ENCODE measurements at regions of chr7 and their contacts with region 1.

Region 1: DNA sequence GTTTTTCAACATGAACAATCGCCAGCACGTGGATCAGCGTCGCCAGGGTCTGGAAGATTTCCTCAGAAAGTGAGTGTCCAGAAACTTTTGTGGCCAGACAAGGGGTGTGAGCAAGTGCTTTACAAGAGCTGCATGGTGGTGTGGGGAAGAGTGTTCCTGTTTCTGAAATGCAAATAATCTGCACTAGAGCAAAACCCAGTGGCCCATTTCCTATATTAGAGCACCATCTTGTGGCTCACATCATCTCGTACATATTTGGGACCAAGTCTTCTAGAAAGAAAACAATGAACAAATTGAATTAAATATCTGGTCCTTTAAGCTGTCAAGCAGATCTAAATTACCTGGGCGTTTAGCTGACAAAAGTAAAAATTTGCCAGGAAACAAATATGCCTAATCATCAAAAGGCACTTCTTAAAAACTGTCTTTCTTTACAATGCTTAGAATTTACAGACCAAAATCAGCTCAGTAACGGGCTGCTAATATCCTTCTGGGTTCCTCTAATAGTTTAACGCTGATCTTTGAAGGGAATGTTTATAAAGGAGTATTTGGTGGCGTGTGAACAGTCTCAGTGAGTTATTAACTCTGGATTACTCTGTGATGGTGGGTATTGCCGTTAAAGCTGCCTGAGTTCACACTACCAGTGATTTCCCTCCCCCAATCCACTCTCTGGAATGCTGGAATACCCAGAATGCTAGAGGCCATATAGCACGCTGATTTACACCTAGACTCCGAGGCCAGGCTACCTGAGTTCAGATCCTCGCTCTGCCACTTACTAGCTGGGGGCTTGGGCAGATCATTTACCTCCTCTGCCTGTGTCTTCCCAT is 73.6 kb downstream of the SNX10 start:
- DNase-seq: no peak
- ATAC-seq: peak; percentile 89
- H3K4me3 Mint-ChIP-seq: no peak overlapping the region
- H3K27ac Mint-ChIP-seq: peak overlapping the region; percentile 85
- H3K4me1 Mint-ChIP-seq: peaks cover 46% of the 10 kb centered on the region
- H3K27me3 Mint-ChIP-seq: no peaks in the 10 kb centered on the region
- CTCF ChIP-seq: peak; percentile 52

Region 2: DNA sequence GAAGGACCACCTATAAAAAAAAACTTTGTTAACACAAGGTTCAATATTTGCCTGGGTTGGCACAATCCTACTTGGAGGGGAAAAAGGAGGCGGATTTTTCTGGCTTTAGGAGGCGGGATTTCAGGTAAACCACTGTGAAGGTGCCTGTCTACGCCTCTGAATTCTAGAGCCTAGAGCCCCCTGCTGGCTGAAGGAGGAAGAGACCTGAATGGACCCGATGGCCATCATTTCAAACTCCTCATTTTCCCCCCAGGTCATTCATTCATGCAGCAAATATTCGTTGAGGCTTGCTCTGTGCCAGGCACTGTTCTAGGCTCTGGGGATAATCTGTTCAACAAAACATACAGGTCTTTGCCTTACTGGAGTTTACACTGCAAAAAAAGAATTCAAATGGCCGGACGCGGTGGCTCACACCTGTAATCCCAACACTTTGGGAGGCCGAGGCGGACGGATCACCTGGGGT is 303.6 kb before region 1 on chr7:
- CTCF ChIA-PET with region 1: interaction called, 6 read pairs
- POLR2A ChIA-PET with region 1: no interaction called
- intact Hi-C with region 1: loop called (anchors 1 kb)
- DNase-seq: peak; percentile 51
- ATAC-seq: peak; percentile 82
- H3K4me3 Mint-ChIP-seq: no peak overlapping the region
- H3K27ac Mint-ChIP-seq: no peak overlapping the region
- H3K4me1 Mint-ChIP-seq: peaks cover 4% of the 10 kb centered on the region
- H3K27me3 Mint-ChIP-seq: peaks cover 42% of the 10 kb centered on the region
- CTCF ChIP-seq: no peak

Region 3: GRCh38 chr7:26151953-26152781 is 213.1 kb before region 1 on chr7 and contains the start of gene NFE2L3:
- CTCF ChIA-PET with region 1: interaction called, 7 read pairs
- POLR2A ChIA-PET with region 1: no interaction called
- intact Hi-C with region 1: loop called (anchors 2 kb)
- DNase-seq: peak; percentile 82
- ATAC-seq: peak; percentile 90
- H3K4me3 Mint-ChIP-seq: peak within 1 kb of the TSS; percentile 94
- H3K27ac Mint-ChIP-seq: peak within 1 kb of the TSS; percentile 86
- H3K4me1 Mint-ChIP-seq: peaks cover 48% of the 10 kb centered on the region
- H3K27me3 Mint-ChIP-seq: no peaks in the 10 kb centered on the region
- CTCF ChIP-seq: no peak
- total RNA-seq, gene NFE2L3: 2.7 and 3.0 TPM in 2 replicates

Region 4: GRCh38 chr7:26348234-26348851 is 16.9 kb before region 1 on chr7:
- CTCF ChIA-PET with region 1: interaction called, 13 read pairs
- POLR2A ChIA-PET with region 1: no interaction called
- intact Hi-C with region 1: no loop called
- DNase-seq: no peak
- ATAC-seq: peak; percentile 42
- H3K4me3 Mint-ChIP-seq: no peak overlapping the region
- H3K27ac Mint-ChIP-seq: peak overlapping the region; percentile 30
- H3K4me1 Mint-ChIP-seq: peaks cover 40% of the 10 kb centered on the region
- H3K27me3 Mint-ChIP-seq: no peaks in the 10 kb centered on the region
- CTCF ChIP-seq: no peak

Region 5: GRCh38 chr7:26500749-26501352 is 135.6 kb after region 1 on chr7:
- CTCF ChIA-PET with region 1: interaction called, 25 read pairs
- POLR2A ChIA-PET with region 1: no interaction called
- intact Hi-C with region 1: loop called (anchors 1 kb)
- DNase-seq: no peak
- ATAC-seq: peak; percentile 76
- H3K4me3 Mint-ChIP-seq: no peak overlapping the region
- H3K27ac Mint-ChIP-seq: no peak overlapping the region
- H3K4me1 Mint-ChIP-seq: no peaks in the 10 kb centered on the region
- H3K27me3 Mint-ChIP-seq: peaks cover 10% of the 10 kb centered on the region
- CTCF ChIP-seq: peak; percentile 29

Region 6: DNA sequence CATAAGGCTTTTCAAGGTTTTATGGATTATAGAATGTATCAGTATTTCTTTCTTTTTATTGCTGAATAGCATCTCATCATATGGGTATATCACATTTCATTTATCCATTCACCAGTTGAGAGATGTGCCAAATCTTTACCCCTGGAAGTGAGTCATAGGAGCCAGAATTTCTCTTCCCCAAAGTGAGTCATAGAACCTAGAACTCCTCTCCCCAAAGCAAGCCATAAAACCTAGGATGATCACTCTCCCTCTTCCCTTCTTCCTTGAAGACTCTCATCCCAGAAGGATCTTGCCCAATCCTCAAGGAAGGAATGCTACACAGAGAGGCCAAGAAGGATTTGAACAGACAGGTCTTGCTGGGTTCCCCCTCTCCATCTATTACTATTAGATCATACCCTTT is 1077.2 kb after region 1 on chr7:
- CTCF ChIA-PET with region 1: no interaction called
- POLR2A ChIA-PET with region 1: no interaction called
- intact Hi-C with region 1: no loop called
- DNase-seq: no peak
- ATAC-seq: no peak
- H3K4me3 Mint-ChIP-seq: no peak overlapping the region
- H3K27ac Mint-ChIP-seq: no peak overlapping the region
- H3K4me1 Mint-ChIP-seq: no peaks in the 10 kb centered on the region
- H3K27me3 Mint-ChIP-seq: peaks cover 7% of the 10 kb centered on the region
- CTCF ChIP-seq: no peak